A673 (cell line): ENCODE measurements at regions of chr6 and their contacts with region 1.

Region 1: DNA sequence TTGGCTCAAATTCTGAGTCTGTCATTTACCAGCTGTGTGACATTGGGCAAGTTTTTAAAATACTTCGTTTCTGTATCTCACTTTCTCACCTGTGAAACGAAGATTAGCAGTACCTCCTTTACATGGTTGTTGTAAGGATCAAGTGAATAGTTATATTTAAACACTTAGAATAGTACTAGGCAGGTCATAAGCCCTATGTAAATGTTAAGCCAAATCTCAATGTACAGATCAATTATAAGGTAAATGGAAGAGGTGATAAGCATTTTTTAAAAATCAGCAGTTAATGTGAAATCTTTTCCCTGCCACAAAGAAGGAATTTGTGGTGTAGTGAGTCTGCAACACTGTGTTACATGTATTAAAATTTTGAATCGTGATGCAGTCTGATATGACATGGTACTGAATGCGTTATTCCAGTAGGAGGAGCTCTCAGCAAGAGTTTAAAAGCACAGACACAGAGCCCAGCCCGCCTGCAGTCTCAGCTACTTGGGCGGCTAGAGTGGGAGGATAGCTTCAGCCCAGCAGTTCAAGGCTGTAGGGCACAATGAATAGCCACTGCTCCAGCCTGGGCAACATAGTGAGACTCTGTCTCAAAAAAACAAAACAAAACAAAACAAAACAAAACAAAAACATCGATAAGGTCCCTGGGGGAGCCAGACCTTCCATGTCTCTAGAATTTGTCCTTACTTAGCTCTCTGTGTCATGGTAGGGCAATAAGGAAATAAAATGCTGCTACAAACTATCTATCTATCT is 46.0 kb downstream of the GTF2H5 start:
- DNase-seq: peak; percentile 84
- H3K4me3 ChIP-seq: no peak overlapping the region
- H3K27ac ChIP-seq: no peak overlapping the region
- H3K4me1 ChIP-seq: no peaks in the 10 kb centered on the region
- H3K27me3 ChIP-seq: no peaks in the 10 kb centered on the region
- CTCF ChIP-seq: peak; percentile 90

Region 2: GRCh38 chr6:158279615-158280014 is 65.5 kb after region 1 on chr6:
- CTCF ChIA-PET with region 1: no interaction called
- POLR2A ChIA-PET with region 1: no interaction called
- intact Hi-C with region 1: no loop called
- DNase-seq: no peak
- H3K4me3 ChIP-seq: no peak overlapping the region
- H3K27ac ChIP-seq: no peak overlapping the region
- H3K4me1 ChIP-seq: peaks cover 15% of the 10 kb centered on the region
- H3K27me3 ChIP-seq: no peaks in the 10 kb centered on the region
- CTCF ChIP-seq: no peak

Region 3: GRCh38 chr6:158686791-158687381 is 472.8 kb after region 1 on chr6:
- CTCF ChIA-PET with region 1: interaction called, 26 read pairs
- POLR2A ChIA-PET with region 1: no interaction called
- intact Hi-C with region 1: loop called (anchors 1 kb)
- DNase-seq: no peak
- H3K4me3 ChIP-seq: no peak overlapping the region
- H3K27ac ChIP-seq: no peak overlapping the region
- H3K4me1 ChIP-seq: no peaks in the 10 kb centered on the region
- H3K27me3 ChIP-seq: no peaks in the 10 kb centered on the region
- CTCF ChIP-seq: no peak

Region 4: GRCh38 chr6:158978757-158979156 is 764.7 kb after region 1 on chr6:
- CTCF ChIA-PET with region 1: no interaction called
- POLR2A ChIA-PET with region 1: no interaction called
- intact Hi-C with region 1: loop called (anchors 5 kb)
- DNase-seq: no peak
- H3K4me3 ChIP-seq: no peak overlapping the region
- H3K27ac ChIP-seq: no peak overlapping the region
- H3K4me1 ChIP-seq: no peaks in the 10 kb centered on the region
- H3K27me3 ChIP-seq: no peaks in the 10 kb centered on the region
- CTCF ChIP-seq: no peak